ENCODE measurements at regions of chr6 and their contacts with region 1.

Region 1: DNA sequence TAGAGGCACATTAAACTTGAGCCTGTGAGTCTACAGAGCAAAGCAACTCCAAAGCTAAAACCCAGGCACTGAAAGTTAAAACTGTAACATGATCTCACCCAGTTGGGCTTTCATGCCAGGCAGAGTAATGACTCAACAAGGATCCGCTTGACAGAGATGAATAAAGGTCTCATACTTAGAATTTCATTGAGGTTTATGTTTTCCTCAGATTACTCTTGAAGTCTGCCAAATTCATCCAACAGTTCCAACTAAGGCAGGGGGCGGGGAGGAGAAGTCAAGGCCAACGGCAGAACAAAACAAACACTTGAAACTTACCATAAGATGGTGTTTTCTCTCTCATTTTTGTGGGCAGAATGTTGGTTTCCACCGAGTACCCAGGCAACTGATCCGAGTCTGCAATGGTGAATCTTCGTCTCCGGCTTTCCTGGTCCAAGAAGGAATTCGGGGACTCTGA is 54.0 kb upstream of the IPCEF1 start:
- DNase-seq: peak; percentile 20 to 53
- ATAC-seq: peak; percentile 100
- H3K4me3 ChIP-seq: peak overlapping the region in 1 of 4 donors; percentile 12
- H3K27ac ChIP-seq: peak overlapping the region; percentile 73 to 85 (median 81)
- H3K4me1 ChIP-seq: peaks cover 24 to 29% of the 10 kb centered on the region in 2 donors
- H3K27me3 ChIP-seq: no peaks in the 10 kb centered on the region
- CTCF ChIP-seq: no peak
- POLR2A ChIP-seq: no peak

Region 2: DNA sequence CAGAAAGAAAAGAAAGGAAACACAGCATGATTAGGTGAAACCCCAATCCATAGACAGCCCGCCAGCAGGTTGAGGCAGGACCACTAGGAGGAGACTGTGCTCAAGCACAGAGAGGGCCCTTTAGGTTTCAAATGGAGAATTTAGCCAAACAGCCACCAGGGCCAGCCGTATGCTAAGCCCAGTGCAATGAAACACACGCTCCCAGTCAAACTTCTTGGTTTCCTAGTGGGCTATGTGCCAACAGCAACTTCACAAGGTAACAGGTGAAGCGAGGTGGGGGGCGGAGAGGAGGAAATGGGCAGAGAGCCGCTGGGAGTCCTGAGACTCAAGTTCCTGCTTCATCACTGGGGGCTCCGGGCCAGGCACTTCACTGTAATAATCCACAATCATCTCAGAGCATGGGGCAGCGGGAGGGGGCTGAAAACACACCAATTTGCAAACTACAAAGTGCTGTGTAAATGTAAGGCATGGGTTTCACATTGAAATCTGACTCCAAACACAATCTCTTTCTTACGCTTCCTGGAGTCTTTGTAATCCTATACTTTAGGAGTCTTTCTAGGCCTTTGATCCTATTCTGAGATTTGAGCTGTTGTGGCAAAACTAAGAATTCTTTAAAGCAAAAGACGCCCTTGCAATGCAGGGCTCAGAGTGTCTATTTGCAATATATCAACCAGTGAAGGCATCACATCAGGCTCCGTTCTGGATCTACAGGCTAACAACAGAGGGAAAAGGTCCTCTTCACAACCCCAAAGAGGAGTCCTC is 254.3 kb before region 1 on chr6:
- in situ Hi-C with region 1: loop called (anchors 5 to 25 kb)
- intact Hi-C with region 1: loop called (anchors 1 kb)
- DNase-seq: no peak
- ATAC-seq: no peak
- H3K4me3 ChIP-seq: no peak overlapping the region
- H3K27ac ChIP-seq: no peak overlapping the region
- H3K4me1 ChIP-seq: no peaks in the 10 kb centered on the region
- H3K27me3 ChIP-seq: no peaks in the 10 kb centered on the region
- CTCF ChIP-seq: peak in 2 of 5 experiments; percentile 10 to 15
- POLR2A ChIP-seq: no peak

Region 3: DNA sequence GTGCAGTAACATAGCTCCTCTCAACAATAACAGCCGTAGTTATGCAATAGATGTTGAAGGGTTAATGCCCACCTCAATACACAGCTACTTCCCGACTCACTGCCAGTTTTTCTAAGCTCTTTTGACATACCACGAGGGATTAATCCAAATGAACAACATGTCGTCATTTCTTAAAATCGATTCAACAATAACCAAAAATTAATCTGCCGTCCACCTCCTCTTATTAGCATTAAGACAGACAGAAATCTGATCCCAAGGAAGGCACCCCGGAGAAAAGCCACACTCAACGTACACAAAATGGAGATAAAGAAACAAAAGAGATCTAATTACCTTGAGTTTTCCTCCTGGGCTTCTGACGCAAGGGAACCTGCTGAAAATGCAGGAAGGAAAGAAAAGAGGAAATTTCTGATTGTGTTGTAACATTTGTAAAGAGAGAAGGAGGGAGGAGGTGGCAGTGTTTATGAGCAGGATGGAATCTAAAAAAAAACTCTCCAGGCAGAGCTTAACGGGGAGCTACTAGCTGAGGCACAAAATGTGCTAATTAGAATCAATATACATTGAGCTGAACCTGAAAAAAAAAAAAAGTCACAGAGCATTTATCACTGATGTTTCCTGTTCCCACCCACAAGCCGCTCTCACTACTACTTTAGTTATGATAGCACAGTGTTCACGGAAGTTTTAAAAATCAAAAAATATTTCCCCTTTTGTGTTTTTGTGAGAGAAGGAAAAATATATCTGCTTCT is 163.4 kb before region 1 on chr6:
- in situ Hi-C with region 1: no loop called
- intact Hi-C with region 1: no loop called
- DNase-seq: no peak
- ATAC-seq: no peak
- H3K4me3 ChIP-seq: peak overlapping the region in 3 of 4 donors; percentile 8 to 23 (median 21)
- H3K27ac ChIP-seq: no peak overlapping the region
- H3K4me1 ChIP-seq: no peaks in the 10 kb centered on the region
- H3K27me3 ChIP-seq: no peaks in the 10 kb centered on the region
- CTCF ChIP-seq: no peak
- POLR2A ChIP-seq: no peak

Region 4: GRCh38 chr6:154510143-154510905 is 99.7 kb after region 1 on chr6 and contains the start of gene CNKSR3:
- in situ Hi-C with region 1: loop called in 1 of 4 experiments (anchors 25 kb)
- intact Hi-C with region 1: no loop called
- DNase-seq: peak; percentile 70 to 71
- ATAC-seq: peak; percentile 81
- H3K4me3 ChIP-seq: peak within 1 kb of the TSS; percentile 74 to 83 (median 78)
- H3K27ac ChIP-seq: peak within 1 kb of the TSS; percentile 79 to 90 (median 86)
- H3K4me1 ChIP-seq: peaks cover 12 to 18% of the 10 kb centered on the region in 2 donors
- H3K27me3 ChIP-seq: no peaks in the 10 kb centered on the region
- CTCF ChIP-seq: no peak
- POLR2A ChIP-seq: peak; percentile 49 to 78
- total RNA-seq, gene CNKSR3: 0.70 to 4.6 (median 2.9) TPM

Region 5: GRCh38 chr6:155418017-155418761 is 1007.5 kb after region 1 on chr6:
- in situ Hi-C with region 1: no loop called
- intact Hi-C with region 1: no loop called
- DNase-seq: no peak
- ATAC-seq: peak; percentile 26 to 58
- H3K4me3 ChIP-seq: peak overlapping the region in 3 of 4 donors; percentile 3 to 23 (median 17)
- H3K27ac ChIP-seq: no peak overlapping the region
- H3K4me1 ChIP-seq: peaks cover 0 to 5% of the 10 kb centered on the region in 2 donors
- H3K27me3 ChIP-seq: no peaks in the 10 kb centered on the region
- CTCF ChIP-seq: no peak
- POLR2A ChIP-seq: no peak

Measured in gastrocnemius medialis (tissue), 4 donors.